ENCODE measurements at regions of chr2 and their contacts with region 1.

Region 1: GRCh38 chr2:219160186-219161017 is at the start of gene NHEJ1:
- DNase-seq: peak; percentile 98
- ATAC-seq: peak; percentile 86
- H3K4me3 ChIP-seq: peak within 1 kb of the TSS; percentile 39 to 84 (median 72)
- H3K4me3 Mint-ChIP-seq: peak within 1 kb of the TSS; percentile 98
- H3K27ac ChIP-seq: peak within 1 kb of the TSS; percentile 56 to 63
- H3K27ac Mint-ChIP-seq: peak within 1 kb of the TSS; percentile 97
- H3K4me1 ChIP-seq: peaks cover 9 to 13% of the 10 kb centered on the region in 2 donors
- H3K4me1 Mint-ChIP-seq: peaks cover 21% of the 10 kb centered on the region
- H3K27me3 ChIP-seq: no peaks in the 10 kb centered on the region
- H3K27me3 Mint-ChIP-seq: no peaks in the 10 kb centered on the region
- CTCF ChIP-seq: peak; percentile 97
- total RNA-seq, gene NHEJ1: 20.3 and 25.0 TPM in 2 replicates

Region 2: DNA sequence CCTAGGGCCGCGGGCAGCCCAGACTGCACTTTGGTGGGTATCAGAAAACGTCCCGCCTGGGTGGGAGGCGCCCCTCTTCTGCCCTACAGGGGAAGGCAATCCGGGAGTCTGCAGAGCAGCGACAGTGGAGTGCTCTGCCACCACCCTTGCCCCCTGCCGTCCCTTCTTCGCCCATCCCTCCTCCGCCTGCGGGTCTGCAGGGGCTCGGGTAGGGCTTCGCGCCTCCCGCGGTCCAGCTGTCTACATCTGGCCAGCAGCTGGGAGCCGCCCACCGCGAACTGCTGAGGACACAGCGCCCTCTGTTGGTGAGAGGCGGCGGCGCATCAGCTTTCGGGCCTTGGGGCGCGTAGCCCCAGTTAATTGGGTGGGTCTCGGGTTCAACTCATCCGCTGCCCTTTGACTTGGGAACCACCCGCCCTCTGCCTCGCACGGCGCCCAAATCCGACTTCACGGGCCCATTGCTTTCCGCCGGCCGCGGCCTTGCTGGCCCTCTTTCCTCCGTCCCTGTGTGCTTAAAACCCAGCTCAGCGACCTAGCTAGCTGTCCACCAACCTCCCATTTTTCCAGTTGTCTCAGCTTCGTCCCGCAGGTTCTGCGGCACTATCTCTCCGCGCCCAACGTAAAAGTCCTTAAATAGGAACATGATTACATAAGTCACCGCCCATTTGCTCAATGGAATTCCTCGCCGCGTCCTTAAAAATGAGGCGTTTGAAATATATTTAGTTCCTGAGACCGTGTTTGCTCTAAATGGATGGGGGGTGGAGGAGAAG is 262.1 kb before region 1 on chr2:
- CTCF ChIA-PET with region 1: interaction called, 3 read pairs
- POLR2A ChIA-PET with region 1: no interaction called
- intact Hi-C with region 1: loop called (anchors 5 kb)
- DNase-seq: peak; percentile 87
- ATAC-seq: peak; percentile 18
- H3K4me3 ChIP-seq: peak overlapping the region in 4 of 5 experiments; percentile 66 to 68 (median 68)
- H3K4me3 Mint-ChIP-seq: peak overlapping the region; percentile 87
- H3K27ac ChIP-seq: no peak overlapping the region
- H3K27ac Mint-ChIP-seq: peak overlapping the region; percentile 91
- H3K4me1 ChIP-seq: peaks cover 47 to 54% of the 10 kb centered on the region in 2 donors
- H3K4me1 Mint-ChIP-seq: peaks cover 48% of the 10 kb centered on the region
- H3K27me3 ChIP-seq: peaks cover 0 to 28% (median 18%) of the 10 kb centered on the region in 4 experiments
- H3K27me3 Mint-ChIP-seq: peaks cover 31% of the 10 kb centered on the region
- CTCF ChIP-seq: peak; percentile 99

Region 3: DNA sequence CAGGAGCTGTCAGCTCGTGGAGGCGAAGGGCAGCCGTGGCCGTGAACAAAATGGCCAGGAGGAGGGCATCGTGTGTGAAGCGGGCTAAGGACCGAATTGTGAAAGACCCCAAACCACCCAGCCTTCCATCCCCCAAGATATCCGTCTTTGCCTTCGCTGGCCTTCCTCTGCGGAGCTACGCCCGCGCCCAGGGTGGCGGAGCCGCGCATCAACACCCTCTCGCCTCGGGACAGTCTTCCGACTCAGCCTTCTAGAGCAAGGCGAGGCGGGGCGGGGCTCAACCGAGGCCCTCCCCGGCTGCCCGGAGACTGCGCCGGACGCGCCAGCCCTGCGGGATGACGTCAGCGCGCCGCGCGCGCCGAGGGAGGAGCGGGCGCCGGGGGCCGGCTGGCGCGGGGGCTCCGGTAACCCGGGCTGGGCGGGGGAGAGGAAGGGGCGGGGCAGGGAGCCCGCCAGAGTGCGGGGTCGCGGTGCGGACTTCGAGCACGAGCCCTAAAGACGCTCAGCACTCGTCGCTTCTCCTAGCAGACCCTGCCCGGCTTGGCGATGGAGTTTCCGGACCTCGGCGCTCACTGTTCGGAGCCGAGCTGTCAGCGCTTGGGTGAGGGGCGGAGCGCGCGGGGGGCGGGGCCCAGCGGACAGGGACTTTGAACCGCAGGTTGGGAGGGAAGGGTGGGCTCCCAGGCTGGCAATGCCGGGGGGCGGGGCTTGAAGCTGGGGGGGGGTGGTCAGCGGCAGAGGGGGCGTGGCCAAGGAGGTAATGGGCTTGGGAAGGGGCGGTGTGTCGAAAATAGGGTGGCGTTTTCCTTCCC is 46.2 kb after region 1 on chr2 and contains the start of gene ZFAND2B:
- CTCF ChIA-PET with region 1: interaction called, 65 read pairs
- POLR2A ChIA-PET with region 1: interaction called, 6 read pairs
- intact Hi-C with region 1: loop called (anchors 1 kb)
- DNase-seq: peak; percentile 97
- ATAC-seq: peak; percentile 91
- H3K4me3 ChIP-seq: peak within 1 kb of the TSS; percentile 53 to 82 (median 76)
- H3K4me3 Mint-ChIP-seq: peak within 1 kb of the TSS; percentile 96
- H3K27ac ChIP-seq: peak within 1 kb of the TSS; percentile 84 to 94
- H3K27ac Mint-ChIP-seq: peak within 1 kb of the TSS; percentile 98
- H3K4me1 ChIP-seq: peaks cover 16 to 23% of the 10 kb centered on the region in 2 donors
- H3K4me1 Mint-ChIP-seq: peaks cover 28% of the 10 kb centered on the region
- H3K27me3 ChIP-seq: no peaks in the 10 kb centered on the region
- H3K27me3 Mint-ChIP-seq: no peaks in the 10 kb centered on the region
- CTCF ChIP-seq: no peak
- total RNA-seq, gene ZFAND2B: 55.2 and 58.7 TPM in 2 replicates

Region 4: DNA sequence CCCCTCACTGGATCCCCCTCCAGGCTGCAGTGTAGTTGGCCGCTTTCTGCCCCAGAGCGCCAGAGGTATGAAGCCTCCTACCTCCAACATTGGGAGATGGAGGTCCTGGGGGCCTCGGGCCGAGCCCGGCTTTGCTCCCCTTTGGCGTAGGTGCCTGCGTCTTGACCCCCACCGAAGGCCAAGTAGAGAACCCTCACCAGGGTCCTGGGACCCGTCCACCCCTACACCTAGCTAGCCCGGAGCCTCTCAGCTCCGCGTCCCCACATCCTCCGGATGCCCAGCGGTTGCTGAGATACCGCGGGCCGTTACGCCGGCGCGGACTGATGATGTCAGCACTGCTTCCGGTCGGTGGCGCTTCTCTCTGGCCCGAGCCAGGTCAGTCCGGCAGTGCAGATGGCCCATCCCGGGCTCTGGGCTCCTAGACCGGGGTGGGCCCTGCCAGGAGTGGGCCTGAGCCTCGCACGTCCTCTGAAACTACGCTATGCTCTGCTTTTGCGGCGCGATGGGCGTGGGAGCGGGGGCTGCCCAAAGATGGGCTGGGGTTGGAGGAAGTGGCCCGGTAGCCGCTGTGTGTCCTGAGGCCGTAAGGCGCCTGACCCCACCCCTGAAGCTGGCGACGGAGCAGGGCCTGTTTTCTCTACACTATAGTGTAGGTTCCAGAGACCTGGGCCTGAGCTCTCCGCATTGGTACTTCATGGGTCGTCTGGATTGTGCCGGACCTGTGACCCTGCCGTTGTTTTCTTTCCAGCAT is 84.9 kb after region 1 on chr2 and contains the starts of genes GLB1L and STK16:
- CTCF ChIA-PET with region 1: interaction called, 5 read pairs
- POLR2A ChIA-PET with region 1: no interaction called
- intact Hi-C with region 1: loop called (anchors 2 kb)
- DNase-seq: peak; percentile 93
- ATAC-seq: peak; percentile 67
- H3K4me3 ChIP-seq: peak within 1 kb of the TSS; percentile 50 to 98 (median 94)
- H3K4me3 Mint-ChIP-seq: peak within 1 kb of the TSS; percentile 92
- H3K27ac ChIP-seq: peak within 1 kb of the TSS; percentile 87 to 92
- H3K27ac Mint-ChIP-seq: peak within 1 kb of the TSS; percentile 96
- H3K4me1 ChIP-seq: peaks cover 52 to 58% of the 10 kb centered on the region in 2 donors
- H3K4me1 Mint-ChIP-seq: peaks cover 62% of the 10 kb centered on the region
- H3K27me3 ChIP-seq: no peaks in the 10 kb centered on the region
- H3K27me3 Mint-ChIP-seq: no peaks in the 10 kb centered on the region
- CTCF ChIP-seq: no peak
- total RNA-seq, gene GLB1L: 3.9 and 4.1 TPM in 2 replicates
- total RNA-seq, gene STK16: 29.0 and 29.3 TPM in 2 replicates

Region 5: GRCh38 chr2:219294356-219295351 is 134.3 kb after region 1 on chr2:
- CTCF ChIA-PET with region 1: interaction called, 69 read pairs
- POLR2A ChIA-PET with region 1: interaction called, 5 read pairs
- intact Hi-C with region 1: loop called (anchors 1 kb)
- DNase-seq: peak; percentile 95
- ATAC-seq: peak; percentile 97
- H3K4me3 ChIP-seq: peak overlapping the region in 4 of 5 experiments; percentile 48 to 67 (median 60)
- H3K4me3 Mint-ChIP-seq: peak overlapping the region; percentile 80
- H3K27ac ChIP-seq: peak overlapping the region; percentile 62 to 74
- H3K27ac Mint-ChIP-seq: peak overlapping the region; percentile 74
- H3K4me1 ChIP-seq: peaks cover 14 to 19% of the 10 kb centered on the region in 2 donors
- H3K4me1 Mint-ChIP-seq: peaks cover 16% of the 10 kb centered on the region
- H3K27me3 ChIP-seq: peaks cover 0 to 7% (median 1%) of the 10 kb centered on the region in 4 experiments
- H3K27me3 Mint-ChIP-seq: no peaks in the 10 kb centered on the region
- CTCF ChIP-seq: peak; percentile 99

Region 6: DNA sequence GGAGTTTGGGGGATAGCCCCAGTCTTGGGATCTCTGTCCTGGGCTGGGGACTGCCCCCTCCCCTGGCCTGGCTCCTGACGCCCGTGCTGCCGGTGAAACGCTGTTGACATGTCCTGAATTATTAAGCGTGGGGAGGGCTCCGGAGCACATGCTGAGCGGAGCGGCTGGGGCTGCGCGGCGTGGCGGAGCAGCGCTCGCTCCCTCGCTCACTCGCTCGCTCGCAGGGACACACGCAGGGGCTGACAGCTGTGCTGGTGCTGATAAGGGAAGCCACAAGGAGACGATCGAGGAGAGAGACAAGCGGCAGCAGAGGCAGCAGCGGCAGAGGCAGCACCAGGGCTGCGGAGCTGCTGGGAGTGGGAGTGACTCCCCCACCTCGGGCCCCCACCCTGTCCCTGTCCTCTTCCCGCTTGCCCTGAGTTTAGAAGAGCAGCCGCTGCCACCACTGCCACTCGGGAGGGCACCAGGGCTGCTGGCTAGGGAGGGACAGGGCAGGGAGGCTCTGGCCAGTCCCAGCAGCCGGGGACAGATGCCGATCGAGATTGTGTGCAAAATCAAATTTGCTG is 353.9 kb after region 1 on chr2 and contains the start of gene ASIC4:
- CTCF ChIA-PET with region 1: no interaction called
- POLR2A ChIA-PET with region 1: no interaction called
- intact Hi-C with region 1: no loop called
- DNase-seq: no peak
- ATAC-seq: no peak
- H3K4me3 ChIP-seq: no peak within 1 kb of the TSS
- H3K4me3 Mint-ChIP-seq: no peak within 1 kb of the TSS
- H3K27ac ChIP-seq: no peak within 1 kb of the TSS
- H3K27ac Mint-ChIP-seq: no peak within 1 kb of the TSS
- H3K4me1 ChIP-seq: peaks cover 13 to 30% of the 10 kb centered on the region in 2 donors
- H3K4me1 Mint-ChIP-seq: peaks cover 25% of the 10 kb centered on the region
- H3K27me3 ChIP-seq: peaks cover 0 to 91% (median 25%) of the 10 kb centered on the region in 4 experiments
- H3K27me3 Mint-ChIP-seq: peaks cover 72% of the 10 kb centered on the region
- CTCF ChIP-seq: no peak
- total RNA-seq, gene ASIC4: not detected in 2 replicates

Region 7: GRCh38 chr2:219597552-219598307 is 437.3 kb after region 1 on chr2 and contains the start of gene STK11IP:
- CTCF ChIA-PET with region 1: no interaction called
- POLR2A ChIA-PET with region 1: no interaction called
- intact Hi-C with region 1: loop called (anchors 5 kb)
- DNase-seq: peak; percentile 96
- ATAC-seq: peak; percentile 88
- H3K4me3 ChIP-seq: peak within 1 kb of the TSS; percentile 69 to 88 (median 86)
- H3K4me3 Mint-ChIP-seq: peak within 1 kb of the TSS; percentile 98
- H3K27ac ChIP-seq: peak within 1 kb of the TSS; percentile 59 to 88
- H3K27ac Mint-ChIP-seq: peak within 1 kb of the TSS; percentile 98
- H3K4me1 ChIP-seq: peaks cover 10 to 12% of the 10 kb centered on the region in 2 donors
- H3K4me1 Mint-ChIP-seq: peaks cover 23% of the 10 kb centered on the region
- H3K27me3 ChIP-seq: peaks cover 0 to 11% (median 0%) of the 10 kb centered on the region in 4 experiments
- H3K27me3 Mint-ChIP-seq: peaks cover 10% of the 10 kb centered on the region
- CTCF ChIP-seq: no peak
- total RNA-seq, gene STK11IP: 55.6 and 60.8 TPM in 2 replicates

Measured in B cell (primary cell).